ENCODE measurements at regions of chr3 and their contacts with region 1.

Region 1: DNA sequence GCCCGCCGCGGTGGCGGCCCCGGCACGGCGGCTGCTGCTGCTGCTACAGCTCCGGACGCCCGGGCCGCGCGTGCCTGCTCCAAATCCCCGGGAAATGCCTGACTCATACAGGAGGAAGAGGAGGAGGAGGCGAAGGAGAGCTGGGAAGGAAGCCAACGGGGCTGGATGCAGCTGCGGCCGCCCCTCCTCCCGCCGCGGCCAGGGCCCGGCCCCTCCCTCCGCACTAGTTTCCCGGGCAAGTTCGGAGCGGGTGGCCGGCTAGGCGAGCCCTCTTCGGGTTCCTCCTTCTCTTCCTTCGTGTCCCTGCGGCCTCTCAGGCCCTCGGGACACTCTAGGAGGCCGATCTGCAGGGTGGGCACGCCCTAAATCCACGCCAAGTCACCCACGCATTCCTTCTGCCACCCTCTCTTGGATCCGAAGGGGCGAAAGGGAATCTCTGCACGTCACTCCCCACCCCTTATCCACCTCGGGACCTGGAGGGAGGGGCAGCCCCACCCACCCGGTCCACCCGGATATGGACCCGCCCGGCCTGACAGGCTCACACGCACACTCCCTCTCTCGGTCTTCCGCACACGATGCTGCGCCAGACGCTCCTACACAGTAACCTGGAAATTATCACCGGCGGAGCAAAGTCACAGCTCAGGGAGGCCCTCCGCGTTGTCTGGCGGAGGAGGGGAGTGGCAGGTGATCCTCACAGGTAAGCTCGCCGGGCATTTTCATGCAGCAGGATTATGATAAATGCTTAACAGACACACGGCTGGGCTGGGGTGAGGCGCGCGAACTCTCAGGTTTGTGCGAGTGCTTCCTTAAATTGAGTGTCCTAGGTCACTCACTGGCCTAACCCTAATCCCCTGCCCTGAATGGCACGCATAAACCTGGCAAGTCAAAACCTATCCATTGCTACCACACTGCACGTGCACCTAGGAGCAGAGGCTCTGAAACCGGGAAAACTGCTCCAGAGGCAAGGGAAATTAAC is at the starts of genes OSBPL10 and ZNF860:
- DNase-seq: peak; percentile 95
- H3K4me3 Mint-ChIP-seq: peak within 1 kb of the TSS; percentile 93
- H3K27ac Mint-ChIP-seq: peak within 1 kb of the TSS; percentile 91
- H3K4me1 Mint-ChIP-seq: peaks cover 46% of the 10 kb centered on the region
- H3K27me3 Mint-ChIP-seq: no peaks in the 10 kb centered on the region
- CTCF ChIP-seq: no peak
- total RNA-seq, gene OSBPL10: 128 and 172 TPM in 2 replicates
- total RNA-seq, gene ZNF860: 11.7 and 12.5 TPM in 2 replicates

Region 2: GRCh38 chr3:31659246-31659645 is 322.2 kb before region 1 on chr3:
- CTCF ChIA-PET with region 1: no interaction called
- POLR2A ChIA-PET with region 1: interaction called, 4 read pairs
- intact Hi-C with region 1: loop called (anchors 10 kb)
- DNase-seq: no peak
- H3K4me3 Mint-ChIP-seq: no peak overlapping the region
- H3K27ac Mint-ChIP-seq: no peak overlapping the region
- H3K4me1 Mint-ChIP-seq: no peaks in the 10 kb centered on the region
- H3K27me3 Mint-ChIP-seq: no peaks in the 10 kb centered on the region
- CTCF ChIP-seq: no peak

Region 3: DNA sequence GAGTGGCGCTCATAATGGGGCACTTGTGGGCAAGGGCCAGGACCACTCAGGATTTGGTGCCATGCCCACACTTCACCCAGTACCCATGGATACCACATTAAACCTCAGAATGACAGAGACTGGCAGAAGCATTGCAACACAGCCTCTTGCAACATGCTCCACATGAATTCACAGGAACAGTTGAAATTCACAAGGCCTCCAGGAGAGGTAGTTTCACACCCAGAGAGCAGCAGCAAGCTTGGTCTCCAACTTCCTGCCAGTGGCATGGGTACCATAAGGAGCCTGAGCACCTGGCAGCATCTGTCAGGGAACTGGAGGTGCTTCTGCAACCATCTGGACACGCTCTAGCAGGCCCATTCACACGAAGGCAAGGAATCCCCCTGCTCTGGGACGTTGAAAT is 101.5 kb before region 1 on chr3:
- CTCF ChIA-PET with region 1: interaction called, 7 read pairs
- POLR2A ChIA-PET with region 1: interaction called, 49 read pairs
- intact Hi-C with region 1: loop called (anchors 1 kb)
- DNase-seq: peak; percentile 95
- H3K4me3 Mint-ChIP-seq: peak overlapping the region; percentile 30
- H3K27ac Mint-ChIP-seq: peak overlapping the region; percentile 44
- H3K4me1 Mint-ChIP-seq: peaks cover 56% of the 10 kb centered on the region
- H3K27me3 Mint-ChIP-seq: no peaks in the 10 kb centered on the region
- CTCF ChIP-seq: peak; percentile 35

Region 4: GRCh38 chr3:31960793-31961431 is 20.6 kb before region 1 on chr3:
- CTCF ChIA-PET with region 1: interaction called, 5 read pairs
- POLR2A ChIA-PET with region 1: interaction called, 52 read pairs
- intact Hi-C with region 1: no loop called
- DNase-seq: peak; percentile 64
- H3K4me3 Mint-ChIP-seq: peak overlapping the region; percentile 70
- H3K27ac Mint-ChIP-seq: peak overlapping the region; percentile 91
- H3K4me1 Mint-ChIP-seq: peaks cover 43% of the 10 kb centered on the region
- H3K27me3 Mint-ChIP-seq: no peaks in the 10 kb centered on the region
- CTCF ChIP-seq: no peak

Region 5: GRCh38 chr3:31968927-31969418 is 12.5 kb before region 1 on chr3:
- CTCF ChIA-PET with region 1: interaction called, 4 read pairs
- POLR2A ChIA-PET with region 1: interaction called, 52 read pairs
- intact Hi-C with region 1: no loop called
- DNase-seq: peak; percentile 86
- H3K4me3 Mint-ChIP-seq: peak overlapping the region; percentile 69
- H3K27ac Mint-ChIP-seq: peak overlapping the region; percentile 99
- H3K4me1 Mint-ChIP-seq: peaks cover 32% of the 10 kb centered on the region
- H3K27me3 Mint-ChIP-seq: no peaks in the 10 kb centered on the region
- CTCF ChIP-seq: no peak

Region 6: DNA sequence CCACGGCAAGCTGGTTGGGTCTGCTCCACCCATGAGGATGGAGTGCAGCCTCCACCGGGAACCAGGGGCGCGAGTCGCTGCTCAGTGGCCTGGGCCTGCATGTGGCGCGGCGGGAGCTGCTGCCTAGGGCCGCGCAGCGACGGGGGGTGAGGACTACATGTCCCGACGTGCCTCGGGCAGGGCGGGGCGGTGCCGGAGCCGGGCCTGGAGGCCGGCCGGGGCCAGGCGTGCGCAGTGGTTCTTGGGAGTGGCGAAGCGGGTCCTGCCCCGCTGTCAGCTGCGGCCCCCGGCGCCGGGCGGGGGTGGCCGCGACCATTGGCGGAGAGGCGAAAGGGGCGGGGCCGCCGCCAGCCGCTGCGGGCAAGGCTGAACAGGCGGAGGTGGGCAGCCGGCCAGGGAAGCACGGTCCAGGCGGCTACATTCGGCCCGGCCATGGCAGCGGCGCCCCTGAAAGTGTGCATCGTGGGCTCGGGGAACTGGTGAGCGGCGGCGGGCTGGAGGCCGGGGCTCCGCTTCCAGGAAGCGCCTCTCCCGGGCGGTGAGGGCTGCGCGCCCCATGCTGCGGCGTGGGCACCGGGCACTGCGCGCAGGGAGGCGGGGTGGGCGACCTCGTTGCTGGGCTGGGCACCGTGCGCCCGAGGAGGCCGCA is 124.9 kb after region 1 on chr3 and contains the start of gene GPD1L:
- CTCF ChIA-PET with region 1: interaction called, 3 read pairs
- POLR2A ChIA-PET with region 1: interaction called, 10 read pairs
- intact Hi-C with region 1: no loop called
- DNase-seq: peak; percentile 95
- H3K4me3 Mint-ChIP-seq: peak within 1 kb of the TSS; percentile 77
- H3K27ac Mint-ChIP-seq: peak within 1 kb of the TSS; percentile 16
- H3K4me1 Mint-ChIP-seq: peaks cover 14% of the 10 kb centered on the region
- H3K27me3 Mint-ChIP-seq: no peaks in the 10 kb centered on the region
- CTCF ChIP-seq: no peak
- total RNA-seq, gene GPD1L: 8.5 and 9.7 TPM in 2 replicates

Region 7: DNA sequence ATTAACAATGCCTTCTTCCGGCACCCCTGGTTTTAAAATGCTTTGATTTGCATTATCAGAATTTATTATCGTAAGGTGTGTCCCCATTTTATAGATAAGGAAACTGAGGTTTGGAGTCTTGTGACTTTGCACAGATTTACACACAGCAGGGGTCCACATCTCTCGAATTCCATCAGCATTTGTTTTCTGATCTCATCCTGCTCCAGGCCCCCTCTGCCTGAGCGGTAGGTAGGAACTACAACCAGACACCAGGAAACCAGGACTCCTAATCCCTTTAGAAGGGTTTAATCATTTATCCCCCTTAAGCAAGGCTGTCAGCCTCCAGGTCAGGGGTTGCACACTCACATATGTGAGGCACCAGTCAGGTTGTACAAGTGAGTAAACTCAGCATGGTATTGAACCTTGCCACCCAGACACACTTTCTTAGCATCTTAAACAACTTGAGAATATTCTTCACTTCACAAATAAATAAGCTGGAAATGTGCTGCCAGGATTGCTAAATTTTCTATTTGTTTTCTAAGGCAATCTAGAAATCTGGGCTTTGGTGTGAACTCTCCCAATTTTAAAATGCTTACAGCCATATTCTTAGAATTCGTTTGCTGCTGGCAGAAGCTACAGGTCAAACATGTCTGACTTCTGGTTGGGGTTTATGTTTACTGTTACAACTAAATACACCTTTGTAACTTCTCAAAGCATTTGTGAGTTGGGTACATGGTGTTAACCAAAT is 378.4 kb after region 1 on chr3:
- CTCF ChIA-PET with region 1: no interaction called
- POLR2A ChIA-PET with region 1: no interaction called
- intact Hi-C with region 1: no loop called
- DNase-seq: no peak
- H3K4me3 Mint-ChIP-seq: no peak overlapping the region
- H3K27ac Mint-ChIP-seq: no peak overlapping the region
- H3K4me1 Mint-ChIP-seq: no peaks in the 10 kb centered on the region
- H3K27me3 Mint-ChIP-seq: no peaks in the 10 kb centered on the region
- CTCF ChIP-seq: no peak